ENCODE measurements at regions of chr20 and their contacts with region 1.

Region 1: GRCh38 chr20:645318-646106 is 7.5 kb downstream of the SRXN1 start:
- DNase-seq: peak; percentile 92
- H3K4me3 ChIP-seq: no peak overlapping the region; a peak in 1 of 4 replicates
- H3K27ac ChIP-seq: no peak overlapping the region; a peak in 1 of 4 replicates
- H3K4me1 ChIP-seq: peaks cover 0 to 3% of the 10 kb centered on the region in 2 experiments; a peak in 1 of 4 replicates
- H3K27me3 ChIP-seq: no peaks in the 10 kb centered on the region
- CTCF ChIP-seq: peak; percentile 94
- EP300 ChIP-seq: no peak
- RAD21 ChIP-seq: peak; percentile 88

Region 2: DNA sequence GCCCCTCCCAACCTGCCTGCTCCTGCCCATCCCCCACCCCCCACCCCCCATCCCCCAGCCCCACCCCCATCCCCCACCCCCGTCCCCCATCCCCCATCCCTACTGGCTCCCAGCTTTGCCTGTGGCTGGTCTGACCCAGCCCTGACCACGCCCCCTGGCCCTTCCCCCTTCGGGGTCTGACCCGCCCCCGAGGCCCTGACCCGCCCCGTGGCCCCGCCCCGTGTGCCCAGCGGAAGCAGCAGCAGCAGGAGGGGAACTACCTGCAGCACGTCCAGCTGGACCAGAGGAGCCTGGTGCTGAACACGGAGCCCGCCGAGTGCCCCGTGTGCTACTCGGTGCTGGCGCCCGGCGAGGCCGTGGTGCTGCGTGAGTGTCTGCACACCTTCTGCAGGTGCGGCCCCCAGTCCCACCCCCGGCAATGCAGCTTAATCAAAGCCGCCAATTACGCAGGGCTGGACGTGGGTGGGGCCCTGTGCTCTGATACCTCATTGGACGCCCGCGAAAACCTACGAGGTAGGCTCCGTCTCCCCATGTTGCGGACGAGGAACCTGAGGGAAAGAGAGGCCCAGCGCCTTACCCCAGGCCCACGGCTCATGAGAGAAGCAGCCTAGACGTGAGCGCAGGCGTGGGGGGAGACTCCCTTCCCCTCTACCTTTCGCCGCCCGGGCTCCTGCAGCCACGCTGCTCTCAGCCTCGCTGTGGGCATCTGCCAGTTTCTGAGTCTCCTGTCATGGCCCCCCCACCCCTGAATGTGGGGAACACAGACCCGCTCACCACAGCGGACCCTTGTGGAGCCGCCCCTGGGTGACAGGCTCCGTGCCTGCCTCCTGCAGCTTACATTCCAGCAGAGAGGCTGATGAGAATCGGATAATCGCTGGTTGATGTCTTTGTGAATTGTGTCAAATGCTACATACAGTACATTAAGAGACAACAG is 224.6 kb before region 1 on chr20:
- CTCF ChIA-PET with region 1: no interaction called
- POLR2A ChIA-PET with region 1: no interaction called
- DNase-seq: peak; percentile 80
- H3K4me3 ChIP-seq: no peak overlapping the region
- H3K27ac ChIP-seq: no peak overlapping the region
- H3K4me1 ChIP-seq: no peaks in the 10 kb centered on the region
- H3K27me3 ChIP-seq: no peaks in the 10 kb centered on the region
- CTCF ChIP-seq: no peak
- EP300 ChIP-seq: no peak
- RAD21 ChIP-seq: no peak

Region 3: DNA sequence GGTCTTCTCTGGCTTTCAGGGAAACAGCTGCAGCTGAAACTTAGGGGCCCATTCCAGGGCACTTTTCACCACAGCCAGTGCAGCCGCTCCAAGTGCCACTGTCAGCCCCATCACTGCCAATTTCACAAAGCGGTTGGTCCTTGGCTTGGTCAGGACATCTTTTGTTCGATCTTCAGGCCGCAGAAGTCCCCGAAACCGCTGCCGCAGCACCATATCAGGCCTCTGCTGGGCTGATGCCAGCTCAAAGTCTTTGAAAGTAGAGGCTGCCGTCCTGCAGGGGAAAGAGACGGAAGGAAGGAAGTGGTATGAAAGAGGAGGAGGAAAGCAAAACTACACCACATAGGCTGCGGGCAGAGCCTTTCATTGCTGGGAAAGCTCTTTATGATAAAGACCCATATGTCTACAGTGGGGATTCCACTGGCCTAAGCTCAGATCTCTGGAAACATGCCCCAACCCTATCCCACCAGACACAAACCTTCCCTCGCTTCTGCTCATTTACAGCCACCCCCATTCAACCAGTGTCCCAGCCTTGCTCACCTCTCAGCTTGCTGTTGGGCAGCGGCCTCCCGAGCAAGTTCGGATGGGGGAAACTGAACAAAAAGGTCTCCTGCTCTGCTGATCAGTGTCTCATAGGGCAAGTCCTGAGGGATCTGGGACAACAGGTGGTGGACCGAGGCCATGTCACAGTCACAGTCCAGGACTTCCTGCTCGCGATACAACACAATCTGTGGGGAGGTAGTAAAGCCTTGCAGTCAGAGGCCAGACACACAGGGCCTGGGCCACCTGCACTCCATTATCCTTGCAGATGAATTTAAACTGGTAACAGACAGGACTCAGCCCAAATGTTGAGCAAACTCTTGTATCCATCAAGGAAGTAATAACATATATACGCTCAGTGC is 206.7 kb before region 1 on chr20:
- CTCF ChIA-PET with region 1: no interaction called
- POLR2A ChIA-PET with region 1: no interaction called
- DNase-seq: no peak
- H3K4me3 ChIP-seq: no peak overlapping the region
- H3K27ac ChIP-seq: no peak overlapping the region
- H3K4me1 ChIP-seq: no peaks in the 10 kb centered on the region; a peak in 1 of 4 replicates
- H3K27me3 ChIP-seq: no peaks in the 10 kb centered on the region
- CTCF ChIP-seq: no peak
- EP300 ChIP-seq: no peak
- RAD21 ChIP-seq: no peak

Region 4: DNA sequence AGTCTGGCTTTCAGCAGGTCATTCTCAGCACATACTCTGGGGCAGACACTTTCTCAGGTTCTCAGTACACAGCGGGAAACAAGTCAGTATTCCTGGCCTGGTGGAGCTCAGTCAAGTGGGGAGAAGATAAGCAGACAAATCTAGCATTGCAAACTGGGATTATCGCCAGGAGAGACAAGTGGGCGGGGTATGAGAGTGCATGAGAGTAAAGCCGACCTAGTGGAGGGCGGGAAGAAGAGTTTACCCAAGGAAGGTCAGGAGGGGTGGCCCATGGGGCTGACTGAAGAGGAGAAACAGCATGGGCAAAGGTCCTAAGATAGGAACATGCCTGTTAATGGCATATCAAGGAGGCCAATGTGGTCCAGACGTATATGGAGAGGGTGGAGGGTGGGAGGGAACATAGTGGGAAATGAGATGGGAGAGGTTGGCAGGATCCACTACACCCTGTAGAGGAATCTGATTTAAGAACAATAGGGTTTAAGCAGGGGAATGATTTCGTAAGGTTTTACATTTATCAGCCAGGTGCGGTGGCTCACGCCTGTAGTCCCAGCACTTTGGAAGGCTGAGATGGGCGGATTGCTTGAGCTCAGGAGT is 89.5 kb before region 1 on chr20:
- CTCF ChIA-PET with region 1: interaction called, 150 read pairs
- POLR2A ChIA-PET with region 1: interaction called, 3 read pairs
- DNase-seq: peak; percentile 36
- H3K4me3 ChIP-seq: no peak overlapping the region
- H3K27ac ChIP-seq: no peak overlapping the region
- H3K4me1 ChIP-seq: peaks cover 0 to 7% of the 10 kb centered on the region in 2 experiments; a peak in 1 of 4 replicates
- H3K27me3 ChIP-seq: peaks cover 13% of the 10 kb centered on the region
- CTCF ChIP-seq: no peak
- EP300 ChIP-seq: no peak
- RAD21 ChIP-seq: no peak

Region 5: DNA sequence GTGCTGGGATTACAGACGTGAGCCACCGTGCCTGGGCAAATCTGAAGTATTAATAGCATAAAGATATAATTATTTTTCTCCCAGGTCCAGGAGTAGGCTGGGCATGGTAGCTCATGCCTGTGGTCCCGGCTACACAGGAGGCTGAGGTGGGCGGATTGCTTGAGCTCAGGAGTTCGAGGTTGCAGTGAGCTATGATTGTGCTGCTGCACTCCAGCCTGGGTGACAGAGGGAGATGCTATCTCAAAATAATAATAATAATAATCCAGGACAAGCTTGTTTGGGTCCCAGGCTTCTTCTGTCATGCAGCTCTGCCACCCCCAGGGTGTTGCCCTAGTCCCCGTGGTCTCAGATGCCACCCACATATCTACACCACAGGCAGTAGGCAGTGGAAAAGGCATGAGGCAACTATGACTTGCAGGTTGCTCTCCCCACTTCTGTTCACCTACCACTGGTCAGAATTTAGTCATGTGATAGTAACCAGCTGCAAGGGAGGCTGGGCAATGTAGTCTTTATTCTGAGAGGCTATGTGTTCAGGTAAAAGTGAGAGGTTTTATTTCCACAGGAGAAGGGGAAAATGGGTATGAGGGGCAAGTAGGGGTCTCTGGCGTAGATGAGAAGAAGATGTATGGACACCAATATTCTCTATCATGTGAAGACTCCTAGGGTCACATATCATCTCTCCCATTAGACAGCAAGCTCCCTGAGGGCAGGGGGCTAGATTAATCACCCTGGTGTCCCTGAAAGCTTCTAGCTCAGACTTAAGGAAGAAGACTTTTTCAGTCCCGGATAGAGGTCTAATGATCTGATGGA is 61.1 kb before region 1 on chr20:
- CTCF ChIA-PET with region 1: interaction called, 22 read pairs
- POLR2A ChIA-PET with region 1: no interaction called
- DNase-seq: no peak
- H3K4me3 ChIP-seq: no peak overlapping the region
- H3K27ac ChIP-seq: no peak overlapping the region
- H3K4me1 ChIP-seq: no peaks in the 10 kb centered on the region
- H3K27me3 ChIP-seq: peaks cover 7% of the 10 kb centered on the region; the same call in 1 of the 2 replicates
- CTCF ChIP-seq: no peak
- EP300 ChIP-seq: no peak
- RAD21 ChIP-seq: no peak

Region 6: GRCh38 chr20:634556-634955 is 11.0 kb before region 1 on chr20:
- CTCF ChIA-PET with region 1: interaction called, 30 read pairs
- POLR2A ChIA-PET with region 1: no interaction called
- DNase-seq: peak; percentile 37
- H3K4me3 ChIP-seq: no peak overlapping the region
- H3K27ac ChIP-seq: no peak overlapping the region
- H3K4me1 ChIP-seq: peaks cover 0 to 7% of the 10 kb centered on the region in 2 experiments; a peak in 1 of 4 replicates
- H3K27me3 ChIP-seq: peaks cover 5% of the 10 kb centered on the region; the same call in 1 of the 2 replicates
- CTCF ChIP-seq: no peak
- EP300 ChIP-seq: no peak
- RAD21 ChIP-seq: no peak

Region 7: GRCh38 chr20:699811-700338 is 54.4 kb after region 1 on chr20:
- CTCF ChIA-PET with region 1: interaction called, 18 read pairs
- POLR2A ChIA-PET with region 1: no interaction called
- DNase-seq: peak; percentile 92
- H3K4me3 ChIP-seq: no peak overlapping the region
- H3K27ac ChIP-seq: peak overlapping the region in 1 of 2 experiments; percentile 90; a peak in 2 of 4 replicates
- H3K4me1 ChIP-seq: peaks cover 0 to 24% of the 10 kb centered on the region in 2 experiments; a peak in 1 of 4 replicates
- H3K27me3 ChIP-seq: peaks cover 9% of the 10 kb centered on the region; the same call in 1 of the 2 replicates
- CTCF ChIP-seq: no peak
- EP300 ChIP-seq: peak in 1 of 2 experiments; percentile 83; a peak in 2 of 4 replicates
- RAD21 ChIP-seq: peak; percentile 25

Region 8: DNA sequence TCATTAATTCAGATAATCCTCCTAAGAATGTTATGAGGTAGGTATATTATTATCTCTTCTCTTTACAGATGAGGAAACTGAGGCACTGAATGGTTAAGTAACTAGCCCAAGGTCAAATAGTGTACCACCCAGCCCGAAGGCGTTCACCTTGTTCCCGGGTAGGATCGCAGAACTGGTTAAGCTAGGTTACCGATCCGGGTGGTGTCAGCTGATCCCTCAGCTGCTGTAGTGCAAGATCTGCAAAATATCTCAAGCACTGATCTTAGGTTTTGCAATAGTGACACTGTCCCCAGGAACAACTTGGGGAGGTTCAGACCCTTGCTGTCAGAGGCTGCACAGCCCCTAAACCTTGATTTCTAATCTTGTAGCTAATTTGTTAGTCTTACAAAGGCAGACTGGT is 94.6 kb after region 1 on chr20:
- CTCF ChIA-PET with region 1: interaction called, 38 read pairs
- POLR2A ChIA-PET with region 1: interaction called, 3 read pairs
- DNase-seq: no peak
- H3K4me3 ChIP-seq: no peak overlapping the region
- H3K27ac ChIP-seq: no peak overlapping the region
- H3K4me1 ChIP-seq: no peaks in the 10 kb centered on the region; a peak in 1 of 4 replicates
- H3K27me3 ChIP-seq: no peaks in the 10 kb centered on the region; the same call in 1 of the 2 replicates
- CTCF ChIP-seq: no peak
- EP300 ChIP-seq: no peak
- RAD21 ChIP-seq: no peak

Region 9: GRCh38 chr20:973785-974194 is 328.3 kb after region 1 on chr20:
- CTCF ChIA-PET with region 1: no interaction called
- POLR2A ChIA-PET with region 1: no interaction called
- DNase-seq: peak; percentile 55
- H3K4me3 ChIP-seq: no peak overlapping the region
- H3K27ac ChIP-seq: no peak overlapping the region
- H3K4me1 ChIP-seq: peaks cover 0 to 10% of the 10 kb centered on the region in 2 experiments; a peak in 1 of 4 replicates
- H3K27me3 ChIP-seq: peaks cover 5% of the 10 kb centered on the region; the same call in 1 of the 2 replicates
- CTCF ChIP-seq: peak; percentile 45
- EP300 ChIP-seq: no peak
- RAD21 ChIP-seq: peak; percentile 50